ENCODE measurements at regions of chr9 and their contacts with region 1.

Region 1: GRCh38 chr9:132341177-132341840 is 13.5 kb downstream of the SETX start:
- DNase-seq: no peak
- ATAC-seq: no peak

Region 2: DNA sequence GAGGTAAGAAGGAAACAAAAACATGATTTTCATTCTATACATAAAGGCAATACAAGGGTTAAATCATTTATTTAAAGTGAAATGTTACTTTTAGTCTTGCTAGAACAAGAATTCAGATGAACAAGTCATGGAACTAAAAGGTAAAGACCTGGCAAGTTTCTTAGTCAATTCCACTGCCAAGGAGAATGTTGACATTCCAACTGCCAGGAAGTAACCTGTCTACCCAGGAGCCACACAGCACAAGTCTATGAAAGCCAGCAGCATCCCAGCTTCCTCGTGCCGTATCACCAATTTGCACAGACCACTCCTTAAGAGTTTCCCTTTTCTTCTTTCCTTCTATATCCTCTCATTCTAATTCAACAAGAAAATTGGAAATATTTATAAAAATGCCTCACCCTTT is 66.4 kb before region 1 on chr9:
- intact Hi-C with region 1: loop called (anchors 10 kb)
- DNase-seq: no peak
- ATAC-seq: no peak

Region 3: GRCh38 chr9:132312873-132313272 is 28.4 kb before region 1 on chr9:
- intact Hi-C with region 1: no loop called
- DNase-seq: no peak
- ATAC-seq: no peak

Measured in Right ventricle myocardium superior (tissue), 1 donor.